ENCODE measurements at regions of chr1 and their contacts with region 1.

Region 1: DNA sequence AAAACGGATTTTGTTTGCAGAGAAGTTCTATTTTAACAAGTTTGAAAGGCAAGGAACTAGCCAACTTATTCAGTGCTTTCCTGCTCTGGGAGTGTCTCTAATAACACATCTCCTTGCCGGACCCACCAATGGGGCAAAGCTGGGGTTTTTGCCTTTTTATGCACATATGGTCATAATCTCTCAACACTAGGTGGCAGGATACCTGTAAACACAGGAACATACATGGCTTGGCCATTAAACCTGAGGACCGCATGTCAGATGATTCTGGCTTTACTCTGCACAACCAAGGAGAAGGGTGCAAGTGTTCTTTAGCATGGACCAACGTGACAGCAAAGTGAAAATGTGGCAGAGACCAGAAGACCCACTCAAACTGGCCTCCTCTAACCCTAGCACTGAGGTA is 4.9 kb downstream of the TMEM9 start:
- DNase-seq: peak; percentile 43
- H3K4me3 Mint-ChIP-seq: no peak overlapping the region
- H3K27ac Mint-ChIP-seq: no peak overlapping the region
- H3K4me1 Mint-ChIP-seq: no peaks in the 10 kb centered on the region
- H3K27me3 Mint-ChIP-seq: no peaks in the 10 kb centered on the region
- CTCF ChIP-seq: peak; percentile 64

Region 2: GRCh38 chr1:201184307-201185122 is 35.1 kb after region 1 on chr1:
- CTCF ChIA-PET with region 1: interaction called, 3 read pairs
- intact Hi-C with region 1: loop called (anchors 1 kb)
- DNase-seq: peak; percentile 59
- H3K4me3 Mint-ChIP-seq: no peak overlapping the region
- H3K27ac Mint-ChIP-seq: no peak overlapping the region
- H3K4me1 Mint-ChIP-seq: peaks cover 9% of the 10 kb centered on the region
- H3K27me3 Mint-ChIP-seq: peaks cover 88% of the 10 kb centered on the region
- CTCF ChIP-seq: peak; percentile 37

Region 3: DNA sequence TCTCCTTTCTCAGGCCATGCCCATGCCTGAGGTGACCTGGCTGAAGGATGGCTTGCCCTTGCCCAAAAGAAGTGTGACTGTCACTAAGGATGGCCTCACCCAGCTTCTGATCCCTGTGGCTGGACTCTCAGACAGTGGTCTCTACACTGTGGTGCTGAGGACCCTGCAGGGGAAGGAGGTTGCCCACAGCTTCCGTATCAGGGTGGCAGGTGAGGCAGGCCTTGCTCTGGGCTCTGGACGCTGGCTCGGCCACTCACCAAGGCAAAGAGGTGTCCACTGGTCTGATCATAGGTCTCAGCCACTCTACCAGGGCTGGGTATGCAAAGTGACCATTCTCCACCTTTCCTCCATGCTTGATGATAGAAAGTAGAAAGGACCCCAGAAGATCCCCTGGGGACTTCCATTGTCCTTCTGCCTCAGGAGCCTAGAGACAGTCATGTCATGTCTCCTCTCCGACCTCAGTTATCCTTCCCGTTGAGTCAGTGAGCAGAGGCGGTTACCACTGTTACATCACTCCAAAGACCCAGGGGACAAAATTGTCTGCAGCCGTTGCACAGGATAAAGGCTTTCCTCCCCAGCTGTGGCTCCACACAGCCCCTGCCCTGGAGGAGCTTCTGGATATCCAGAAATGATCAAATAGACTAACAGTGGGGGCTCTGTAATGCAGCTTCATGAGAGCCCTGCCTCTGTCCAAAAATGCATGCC is 75.4 kb after region 1 on chr1:
- CTCF ChIA-PET with region 1: interaction called, 18 read pairs
- intact Hi-C with region 1: loop called (anchors 1 kb)
- DNase-seq: no peak
- H3K4me3 Mint-ChIP-seq: no peak overlapping the region
- H3K27ac Mint-ChIP-seq: no peak overlapping the region
- H3K4me1 Mint-ChIP-seq: no peaks in the 10 kb centered on the region
- H3K27me3 Mint-ChIP-seq: peaks cover 67% of the 10 kb centered on the region
- CTCF ChIP-seq: no peak

Region 4: DNA sequence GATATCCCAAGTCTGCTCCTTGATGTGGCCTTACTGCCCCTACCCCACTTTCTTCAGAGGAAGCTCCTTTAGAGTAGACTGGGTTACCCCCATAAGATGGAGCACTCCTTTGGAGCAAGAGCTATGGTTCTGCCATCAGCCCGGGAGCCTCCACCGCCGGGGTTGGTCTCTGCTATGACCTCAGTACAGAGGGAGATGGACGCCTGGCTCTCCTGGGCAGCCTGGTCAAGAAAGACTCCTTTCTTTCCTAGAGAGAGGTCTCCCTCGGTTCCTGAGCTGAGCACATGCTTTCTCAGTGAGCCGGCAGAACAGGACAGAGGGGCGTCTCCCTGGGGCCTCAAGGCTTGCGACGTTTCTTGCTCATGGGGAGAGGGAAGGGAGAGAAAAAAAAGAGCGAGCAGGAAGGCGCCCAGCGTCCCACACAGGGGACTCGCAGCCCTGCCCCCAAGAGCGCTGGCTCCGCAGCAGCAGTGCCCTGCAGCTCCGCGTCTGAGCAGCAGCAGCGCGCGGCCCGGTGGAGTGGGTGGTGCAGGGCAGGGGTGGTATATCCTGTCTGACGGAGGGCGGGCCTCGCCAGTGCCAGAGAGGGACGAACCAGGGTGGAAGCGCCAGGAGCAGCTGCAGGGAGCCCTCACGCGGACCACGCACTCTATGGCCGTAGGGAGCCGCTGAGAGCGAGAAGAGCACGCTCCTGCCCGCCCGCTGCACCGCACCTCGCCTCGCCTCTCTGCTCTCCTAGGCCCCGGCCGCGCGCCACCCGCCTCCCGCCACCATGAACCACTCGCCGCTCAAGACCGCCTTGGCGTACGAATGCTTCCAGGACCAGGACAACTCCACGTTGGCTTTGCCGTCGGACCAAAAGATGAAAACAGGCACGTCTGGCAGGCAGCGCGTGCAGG is 133.8 kb after region 1 on chr1 and contains the start of gene PKP1:
- CTCF ChIA-PET with region 1: no interaction called
- intact Hi-C with region 1: no loop called
- DNase-seq: peak; percentile 61
- H3K4me3 Mint-ChIP-seq: peak within 1 kb of the TSS; percentile 49
- H3K27ac Mint-ChIP-seq: no peak within 1 kb of the TSS
- H3K4me1 Mint-ChIP-seq: peaks cover 18% of the 10 kb centered on the region
- H3K27me3 Mint-ChIP-seq: peaks cover 37% of the 10 kb centered on the region
- CTCF ChIP-seq: no peak
- total RNA-seq, gene PKP1: 0.09 and 0.17 TPM in 2 replicates

Measured in Calu3 (cell line).